Caco-2 (cell line): ENCODE measurements at regions of chr20 and their contacts with region 1.

Region 1: DNA sequence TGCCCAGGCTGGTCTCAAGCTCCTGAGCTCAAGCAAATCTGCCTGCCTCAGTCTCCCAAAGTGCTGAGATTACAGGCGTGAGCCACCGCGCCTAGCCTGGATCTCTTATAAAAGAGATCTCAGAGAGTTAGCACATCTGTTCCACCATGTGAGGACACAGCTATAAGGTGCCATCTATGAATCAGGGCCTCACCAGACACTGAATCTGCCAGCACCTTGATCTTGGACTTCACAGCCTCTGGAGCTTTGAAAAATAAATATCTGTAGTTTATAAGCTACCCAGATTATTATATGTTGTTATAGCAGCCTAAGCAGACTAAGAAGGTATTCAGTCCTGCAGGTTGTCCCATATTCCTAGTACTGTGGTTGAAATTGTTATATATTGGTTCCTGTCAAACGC is 33.2 kb upstream of the SHLD1 start:
- DNase-seq: no peak
- H3K4me3 ChIP-seq: no peak overlapping the region
- H3K4me3 Mint-ChIP-seq: no peak overlapping the region
- H3K27ac Mint-ChIP-seq: no peak overlapping the region
- H3K4me1 ChIP-seq: 0 out of 2 replicates have a peak, but pooled peaks cover 3% of the 10 kb centered on the region
- H3K4me1 Mint-ChIP-seq: peaks cover 9% of the 10 kb centered on the region
- H3K27me3 ChIP-seq: no peaks in the 10 kb centered on the region
- H3K27me3 Mint-ChIP-seq: peaks cover 3% of the 10 kb centered on the region
- CTCF ChIP-seq: no peak

Region 2: DNA sequence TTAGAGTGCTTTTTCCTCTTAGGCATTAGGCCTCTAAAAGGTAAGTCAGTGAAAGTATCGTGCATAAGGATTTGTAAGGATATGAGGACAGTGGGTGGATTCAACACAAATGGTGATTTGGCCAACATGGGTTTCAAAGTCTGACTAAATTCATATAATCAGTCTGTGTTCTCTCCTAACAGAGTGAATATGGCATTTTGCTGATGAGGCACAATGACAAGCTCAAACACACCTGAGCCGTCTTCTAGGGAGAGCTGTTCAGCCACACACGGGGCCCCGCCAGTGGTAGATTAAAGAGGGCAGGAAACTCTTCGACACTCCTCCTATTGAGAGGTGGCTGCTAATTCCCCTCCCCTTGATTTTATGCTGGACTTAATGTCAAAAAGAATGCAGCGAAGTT is 340.7 kb before region 1 on chr20:
- CTCF ChIA-PET with region 1: no interaction called
- POLR2A ChIA-PET with region 1: no interaction called
- intact Hi-C with region 1: no loop called
- DNase-seq: no peak
- H3K4me3 ChIP-seq: no peak overlapping the region
- H3K4me3 Mint-ChIP-seq: no peak overlapping the region
- H3K27ac Mint-ChIP-seq: no peak overlapping the region
- H3K4me1 ChIP-seq: no peaks in the 10 kb centered on the region
- H3K4me1 Mint-ChIP-seq: no peaks in the 10 kb centered on the region
- H3K27me3 ChIP-seq: no peaks in the 10 kb centered on the region
- H3K27me3 Mint-ChIP-seq: peaks cover 29% of the 10 kb centered on the region
- CTCF ChIP-seq: no peak

Region 3: DNA sequence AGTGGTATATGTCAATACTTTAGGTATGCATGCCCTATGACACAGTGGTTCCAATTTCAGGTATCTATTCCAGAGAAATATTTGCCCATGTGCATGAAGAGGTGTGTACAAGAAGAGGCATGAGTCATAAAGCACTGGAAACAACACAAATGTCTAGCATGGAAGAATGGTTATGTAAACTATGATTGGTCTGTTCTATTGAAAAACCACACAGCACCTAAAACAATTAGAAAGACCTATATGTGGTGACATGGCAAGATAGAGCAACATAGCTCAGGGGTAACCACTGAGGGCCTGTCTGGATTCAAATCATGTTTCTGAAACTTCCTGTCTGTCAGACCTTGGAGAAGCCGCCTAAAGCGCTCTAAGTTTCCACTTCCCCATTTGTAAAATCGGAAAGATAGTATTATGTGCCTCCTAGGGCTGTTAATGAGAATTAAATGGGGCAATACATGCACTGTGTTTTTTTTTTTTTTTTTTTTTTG is 42.7 kb before region 1 on chr20:
- CTCF ChIA-PET with region 1: interaction called, 6 read pairs
- POLR2A ChIA-PET with region 1: interaction called, 10 read pairs
- intact Hi-C with region 1: no loop called
- DNase-seq: no peak
- H3K4me3 ChIP-seq: no peak overlapping the region
- H3K4me3 Mint-ChIP-seq: no peak overlapping the region
- H3K27ac Mint-ChIP-seq: no peak overlapping the region
- H3K4me1 ChIP-seq: no peaks in the 10 kb centered on the region
- H3K4me1 Mint-ChIP-seq: no peaks in the 10 kb centered on the region
- H3K27me3 ChIP-seq: no peaks in the 10 kb centered on the region
- H3K27me3 Mint-ChIP-seq: no peaks in the 10 kb centered on the region
- CTCF ChIP-seq: no peak

Region 4: GRCh38 chr20:5731753-5732366 is 14.9 kb after region 1 on chr20:
- CTCF ChIA-PET with region 1: no interaction called
- POLR2A ChIA-PET with region 1: no interaction called
- intact Hi-C with region 1: no loop called
- DNase-seq: no peak
- H3K4me3 ChIP-seq: no peak overlapping the region
- H3K4me3 Mint-ChIP-seq: no peak overlapping the region
- H3K27ac Mint-ChIP-seq: no peak overlapping the region
- H3K4me1 ChIP-seq: peaks cover 15% of the 10 kb centered on the region
- H3K4me1 Mint-ChIP-seq: peaks cover 9% of the 10 kb centered on the region
- H3K27me3 ChIP-seq: no peaks in the 10 kb centered on the region
- H3K27me3 Mint-ChIP-seq: no peaks in the 10 kb centered on the region
- CTCF ChIP-seq: no peak

Region 5: GRCh38 chr20:5895626-5896025 is 178.7 kb after region 1 on chr20:
- CTCF ChIA-PET with region 1: no interaction called
- POLR2A ChIA-PET with region 1: no interaction called
- intact Hi-C with region 1: no loop called
- DNase-seq: no peak
- H3K4me3 ChIP-seq: no peak overlapping the region
- H3K4me3 Mint-ChIP-seq: no peak overlapping the region
- H3K27ac Mint-ChIP-seq: no peak overlapping the region
- H3K4me1 ChIP-seq: no peaks in the 10 kb centered on the region
- H3K4me1 Mint-ChIP-seq: no peaks in the 10 kb centered on the region
- H3K27me3 ChIP-seq: no peaks in the 10 kb centered on the region; the same call in 1 of the 2 replicates
- H3K27me3 Mint-ChIP-seq: peaks cover 21% of the 10 kb centered on the region
- CTCF ChIP-seq: no peak